Transverse colon (tissue), 4 donors: ENCODE measurements at regions of chr3 and their contacts with region 1.

Region 1: GRCh38 chr3:66554178-66554577 is 53.4 kb upstream of the LRIG1 start:
- DNase-seq: no peak
- H3K4me3 ChIP-seq: no peak overlapping the region
- H3K27ac ChIP-seq: no peak overlapping the region
- H3K4me1 ChIP-seq: no peaks in the 10 kb centered on the region
- H3K27me3 ChIP-seq: no peaks in the 10 kb centered on the region
- CTCF ChIP-seq: no peak
- EP300 ChIP-seq: no peak
- POLR2A ChIP-seq: no peak

Region 2: DNA sequence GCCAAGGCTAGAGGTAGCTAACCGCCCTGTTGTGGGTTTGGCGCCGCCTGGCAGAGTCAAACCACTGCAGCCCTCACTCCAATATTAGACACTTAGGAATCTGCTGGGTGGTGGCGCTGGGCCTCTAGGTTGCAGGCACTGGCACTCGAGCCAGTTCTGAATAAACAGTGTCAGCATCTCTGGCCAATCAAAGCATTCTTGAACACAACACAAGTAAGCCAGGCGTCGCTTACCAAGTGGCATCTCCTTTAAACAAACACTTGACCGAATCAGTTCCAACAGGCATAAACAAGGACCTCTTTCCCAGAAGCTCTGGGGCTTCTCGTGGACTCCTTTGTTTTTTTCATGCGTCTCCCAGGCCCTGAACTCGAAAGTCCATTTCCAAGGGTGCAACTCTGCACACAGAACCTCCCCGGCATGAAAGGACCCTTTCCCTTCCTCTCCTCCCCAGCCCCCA is 135.7 kb before region 1 on chr3:
- in situ Hi-C with region 1: no loop called
- intact Hi-C with region 1: loop called (anchors 5 kb)
- DNase-seq: peak; percentile 48
- H3K4me3 ChIP-seq: no peak overlapping the region
- H3K27ac ChIP-seq: peak overlapping the region; percentile 61 to 87 (median 69)
- H3K4me1 ChIP-seq: peaks cover 20 to 44% (median 33%) of the 10 kb centered on the region in 4 donors
- H3K27me3 ChIP-seq: no peaks in the 10 kb centered on the region
- CTCF ChIP-seq: no peak
- EP300 ChIP-seq: peak; percentile 74
- POLR2A ChIP-seq: no peak

Region 3: DNA sequence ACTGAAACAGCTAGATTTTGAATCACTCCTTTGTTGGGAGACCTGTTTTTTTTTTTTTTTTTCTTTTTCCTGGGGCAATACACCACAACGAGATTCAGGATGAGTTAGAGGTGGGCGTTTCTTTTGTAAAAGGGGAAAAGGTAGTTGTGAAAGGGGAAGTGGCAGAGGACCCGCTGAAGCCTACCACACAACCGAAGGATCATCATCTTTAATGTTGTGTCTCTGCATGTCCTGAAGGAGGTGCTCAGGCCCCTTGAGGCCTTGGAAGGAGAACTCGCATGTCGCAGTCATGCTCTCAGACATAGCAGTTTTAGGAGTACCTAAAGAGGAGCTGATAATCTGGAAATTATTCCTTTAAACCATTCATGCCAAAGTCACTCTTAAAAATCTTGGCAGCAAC is 84.5 kb after region 1 on chr3:
- in situ Hi-C with region 1: no loop called
- intact Hi-C with region 1: no loop called
- DNase-seq: no peak
- H3K4me3 ChIP-seq: no peak overlapping the region
- H3K27ac ChIP-seq: no peak overlapping the region
- H3K4me1 ChIP-seq: peaks cover 0 to 8% (median 0%) of the 10 kb centered on the region in 4 donors
- H3K27me3 ChIP-seq: no peaks in the 10 kb centered on the region
- CTCF ChIP-seq: no peak
- EP300 ChIP-seq: no peak
- POLR2A ChIP-seq: no peak

Region 4: GRCh38 chr3:66693461-66694031 is 139.4 kb after region 1 on chr3:
- in situ Hi-C with region 1: no loop called
- intact Hi-C with region 1: loop called (anchors 5 kb)
- DNase-seq: peak; percentile 44
- H3K4me3 ChIP-seq: no peak overlapping the region
- H3K27ac ChIP-seq: peak overlapping the region; percentile 46 to 78 (median 74)
- H3K4me1 ChIP-seq: peaks cover 12 to 33% (median 17%) of the 10 kb centered on the region in 4 donors
- H3K27me3 ChIP-seq: no peaks in the 10 kb centered on the region
- CTCF ChIP-seq: no peak
- EP300 ChIP-seq: no peak
- POLR2A ChIP-seq: no peak

Region 5: DNA sequence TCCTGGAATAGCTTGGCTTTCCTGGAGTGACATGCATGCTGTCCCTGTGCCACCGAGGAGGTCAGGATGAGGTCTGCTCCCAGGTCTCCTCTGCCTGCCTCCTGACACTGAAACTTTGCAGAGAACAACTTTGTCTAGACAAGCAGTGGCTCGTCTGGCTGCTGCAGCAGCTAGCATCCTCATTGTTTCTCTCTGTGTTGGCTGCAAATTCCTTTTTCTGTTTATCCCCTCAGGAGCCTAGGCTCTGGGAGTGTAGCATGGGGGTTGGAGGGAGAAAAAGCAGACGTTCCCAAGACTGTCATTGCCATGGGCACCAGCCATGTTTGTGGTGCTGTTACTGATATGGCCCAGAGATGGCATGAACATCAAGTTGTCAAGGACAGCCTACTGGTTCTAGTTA is 155.4 kb after region 1 on chr3:
- in situ Hi-C with region 1: no loop called
- intact Hi-C with region 1: loop called (anchors 5 kb)
- DNase-seq: no peak
- H3K4me3 ChIP-seq: no peak overlapping the region
- H3K27ac ChIP-seq: peak overlapping the region in 3 of 4 donors; percentile 11 to 60 (median 41)
- H3K4me1 ChIP-seq: no peaks in the 10 kb centered on the region
- H3K27me3 ChIP-seq: no peaks in the 10 kb centered on the region
- CTCF ChIP-seq: no peak
- EP300 ChIP-seq: peak; percentile 68
- POLR2A ChIP-seq: no peak